ENCODE measurements at regions of chr3 and their contacts with region 1.

Region 1: GRCh38 chr3:14467814-14468620 is 65.6 kb downstream of the SLC6A6 start:
- DNase-seq: peak in 7 of 10 donors; percentile 30 to 93 (median 47)

Region 2: DNA sequence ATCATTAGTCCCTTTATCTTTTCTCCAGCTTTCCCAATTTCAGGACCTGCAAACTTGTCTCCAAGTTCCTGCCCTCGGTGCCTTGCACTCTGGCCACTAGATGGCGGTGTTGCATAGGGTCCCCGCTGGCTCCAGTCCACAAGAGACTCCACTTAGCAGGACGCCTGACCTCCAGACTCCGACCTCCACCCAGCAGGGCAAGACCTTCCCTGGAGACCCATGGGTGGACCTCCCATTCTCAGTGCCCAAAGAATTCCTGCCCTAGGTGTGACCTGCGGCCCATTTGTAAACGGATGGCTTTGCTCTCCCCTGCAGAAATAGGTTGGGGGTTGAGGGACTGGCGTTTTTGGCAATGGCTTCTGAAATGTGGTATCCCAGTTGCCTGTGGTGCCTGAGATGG is 206.8 kb before region 1 on chr3:
- intact Hi-C with region 1: loop called (anchors 1 kb)
- DNase-seq: peak; percentile 69 to 98 (median 90)

Region 3: DNA sequence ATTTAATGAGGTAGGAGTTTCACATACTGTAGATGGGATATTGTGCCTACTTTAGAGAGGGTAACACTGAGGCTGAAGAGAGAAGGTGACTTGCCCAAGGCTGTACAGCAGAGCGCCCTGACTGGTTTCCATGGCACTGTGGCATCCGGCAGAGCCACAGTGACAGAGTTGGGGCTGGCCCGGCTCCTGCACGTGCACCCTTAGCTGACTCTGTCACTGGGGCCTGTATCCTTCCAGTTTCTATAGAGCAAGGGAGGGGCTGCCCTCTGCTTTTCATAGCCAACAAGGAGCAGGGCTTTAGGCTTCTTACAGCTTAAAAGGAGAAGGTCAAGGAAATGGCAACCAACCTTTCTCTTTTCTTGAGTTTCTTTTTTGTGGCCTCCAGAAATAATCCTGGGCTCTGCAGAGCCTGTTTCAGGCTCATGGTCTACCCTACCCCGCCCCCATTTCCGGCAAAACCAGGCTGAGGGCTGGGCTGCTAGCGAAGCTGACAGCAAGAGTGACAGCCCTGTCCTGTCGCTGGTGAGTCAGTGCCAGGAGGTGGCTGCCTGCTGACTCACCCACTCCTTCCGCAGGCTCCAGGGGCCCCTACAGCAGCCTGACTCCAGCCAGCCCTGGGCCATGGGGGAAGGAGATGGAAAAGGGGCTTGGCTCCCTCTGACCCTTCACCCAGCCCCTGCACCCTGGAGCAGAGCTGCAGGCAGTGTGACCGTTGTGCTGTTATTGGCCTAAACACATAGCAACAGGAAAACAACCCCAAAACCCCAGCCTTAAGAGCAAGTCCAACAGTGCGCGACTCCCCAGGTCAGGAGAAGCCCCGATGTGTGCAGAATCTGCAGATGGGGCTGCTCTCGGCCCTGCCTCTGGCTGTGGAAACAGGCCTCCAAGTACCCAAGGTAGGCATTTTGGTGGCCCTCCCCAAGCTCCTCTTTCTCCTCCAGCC is 35.9 kb before region 1 on chr3:
- intact Hi-C with region 1: loop called (anchors 5 kb)
- DNase-seq: peak; percentile 69 to 97 (median 83)

Region 4: GRCh38 chr3:14740983-14741382 is 273.0 kb after region 1 on chr3:
- intact Hi-C with region 1: no loop called
- DNase-seq: no peak

Measured in posterior cingulate gyrus (tissue), 11 donors.